Right ventricle myocardium inferior (tissue), 1 donor: ENCODE measurements at regions of chr20 and their contacts with region 1.

Region 1: DNA sequence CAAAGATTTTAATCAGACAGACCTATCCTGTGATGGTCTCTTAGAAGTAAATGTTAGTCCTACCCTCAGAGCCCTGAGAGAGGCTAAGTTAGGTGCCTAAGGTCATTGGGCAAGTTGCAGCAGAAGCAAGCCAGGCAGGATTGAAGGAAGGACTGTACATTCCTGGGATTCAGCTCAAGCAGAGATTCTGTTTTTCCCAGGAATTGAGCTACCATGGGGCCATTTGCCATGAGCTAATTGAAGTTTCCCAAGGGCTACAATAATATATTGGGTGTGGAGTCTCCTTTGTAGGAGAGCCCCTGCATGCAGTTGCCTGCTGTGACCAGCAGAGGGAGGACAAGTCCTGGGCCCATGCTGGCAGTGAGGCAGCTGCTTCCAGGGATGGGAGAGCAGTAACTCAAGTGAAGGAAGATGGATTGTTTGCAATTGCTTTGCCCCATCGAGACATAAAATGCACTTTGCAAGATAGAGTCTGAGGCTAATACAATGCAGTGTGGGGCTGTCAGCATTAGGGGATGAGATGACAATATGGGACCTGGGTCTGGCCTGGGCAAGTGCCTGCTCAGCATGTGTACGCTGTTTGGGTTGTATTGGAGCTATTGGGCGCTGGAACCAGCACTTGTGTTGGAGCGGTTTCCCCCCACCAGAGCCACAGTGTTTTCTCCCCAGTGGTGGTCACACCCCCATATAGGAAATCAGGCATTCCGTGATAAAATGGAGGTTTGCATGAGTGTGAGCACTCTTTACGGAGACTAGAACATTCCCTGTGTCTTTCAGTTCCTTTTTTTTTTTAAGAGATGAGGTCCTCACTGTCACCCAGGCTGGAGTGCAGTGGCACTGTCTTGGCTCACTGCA is 27.9 kb downstream of the DNMT3B start:
- DNase-seq: peak; percentile 82
- ATAC-seq: peak; percentile 87

Region 2: DNA sequence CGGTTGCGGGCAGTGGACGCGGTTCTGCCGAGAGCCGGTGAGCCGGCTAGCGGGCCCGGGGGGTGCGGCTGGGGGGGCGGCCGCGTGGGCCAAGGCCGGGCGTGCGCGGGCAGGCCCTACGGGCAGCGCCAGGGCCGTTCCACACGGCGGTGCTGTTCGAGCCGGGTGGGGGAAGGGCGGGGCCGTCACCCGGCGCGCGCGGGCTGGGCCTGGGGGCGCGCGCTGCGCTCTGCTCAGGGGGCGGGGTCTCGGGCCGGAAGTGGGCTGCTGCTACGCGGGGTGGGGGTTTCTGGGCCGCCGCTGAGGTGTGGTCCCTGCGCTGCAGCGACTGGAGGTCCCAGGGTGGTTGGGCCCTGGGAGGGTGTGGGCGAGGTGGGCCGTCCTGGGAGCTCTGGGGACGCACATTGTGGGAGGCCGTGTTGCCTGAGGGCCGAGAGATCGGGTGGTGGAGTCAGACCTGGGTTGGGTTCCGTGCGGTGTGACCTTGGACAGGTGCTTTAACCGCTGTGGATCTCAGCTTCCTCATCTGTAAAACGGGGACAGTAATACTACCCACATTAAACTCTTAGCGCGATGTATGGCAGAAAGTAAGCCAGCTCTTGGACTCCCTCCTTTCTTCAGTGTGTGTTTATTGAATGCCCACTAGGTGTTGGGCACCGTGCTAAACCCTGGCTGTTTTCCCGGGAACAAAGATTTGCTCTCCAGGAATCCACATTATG is 30.0 kb after region 1 on chr20:
- intact Hi-C with region 1: no loop called
- DNase-seq: peak; percentile 88
- ATAC-seq: peak; percentile 89

Region 3: GRCh38 chr20:32894026-32894483 is 103.9 kb after region 1 on chr20:
- intact Hi-C with region 1: loop called (anchors 5 kb)
- DNase-seq: peak; percentile 66
- ATAC-seq: no peak

Region 4: GRCh38 chr20:33097001-33097400 is 306.9 kb after region 1 on chr20:
- intact Hi-C with region 1: loop called (anchors 2 kb)
- DNase-seq: no peak
- ATAC-seq: no peak

Region 5: GRCh38 chr20:33299111-33299603 is 509.0 kb after region 1 on chr20:
- intact Hi-C with region 1: loop called (anchors 10 kb)
- DNase-seq: peak; percentile 81
- ATAC-seq: peak; percentile 50